ENCODE measurements at regions of chr14 and their contacts with region 1.

Region 1: GRCh38 chr14:75906676-75907280 is 75.0 kb downstream of the TGFB3 start:
- DNase-seq: no peak

Region 2: GRCh38 chr14:75636100-75636692 is 270.6 kb before region 1 on chr14:
- intact Hi-C with region 1: no loop called
- DNase-seq: no peak

Region 3: GRCh38 chr14:75861161-75861621 is 45.6 kb before region 1 on chr14:
- intact Hi-C with region 1: no loop called
- DNase-seq: no peak

Region 4: DNA sequence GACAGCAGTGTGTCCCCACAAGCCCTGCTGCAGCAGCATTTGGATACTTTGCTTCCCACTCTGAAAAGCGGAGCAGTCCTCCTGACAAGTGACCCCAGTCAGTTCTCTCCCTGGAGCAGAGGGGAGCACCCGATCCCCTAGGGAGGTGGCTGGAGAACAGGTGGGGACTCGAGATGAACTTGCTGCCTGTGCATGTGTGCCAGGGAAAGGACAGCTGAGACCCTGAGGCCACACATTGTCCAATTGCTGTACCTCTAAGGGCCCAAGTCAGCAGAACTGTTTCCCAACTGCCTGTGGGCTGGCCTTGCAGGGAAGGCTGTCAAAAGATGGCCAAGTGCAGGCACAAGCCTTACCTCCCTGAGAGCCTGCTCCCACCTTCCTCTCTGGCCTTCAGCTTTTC is 133.9 kb after region 1 on chr14:
- intact Hi-C with region 1: loop called (anchors 5 kb)
- DNase-seq: no peak

Measured in cardiac septum (tissue), 1 donor.